Right ventricle myocardium superior (tissue), 1 donor: ENCODE measurements at regions of chr22 and their contacts with region 1.

Region 1: DNA sequence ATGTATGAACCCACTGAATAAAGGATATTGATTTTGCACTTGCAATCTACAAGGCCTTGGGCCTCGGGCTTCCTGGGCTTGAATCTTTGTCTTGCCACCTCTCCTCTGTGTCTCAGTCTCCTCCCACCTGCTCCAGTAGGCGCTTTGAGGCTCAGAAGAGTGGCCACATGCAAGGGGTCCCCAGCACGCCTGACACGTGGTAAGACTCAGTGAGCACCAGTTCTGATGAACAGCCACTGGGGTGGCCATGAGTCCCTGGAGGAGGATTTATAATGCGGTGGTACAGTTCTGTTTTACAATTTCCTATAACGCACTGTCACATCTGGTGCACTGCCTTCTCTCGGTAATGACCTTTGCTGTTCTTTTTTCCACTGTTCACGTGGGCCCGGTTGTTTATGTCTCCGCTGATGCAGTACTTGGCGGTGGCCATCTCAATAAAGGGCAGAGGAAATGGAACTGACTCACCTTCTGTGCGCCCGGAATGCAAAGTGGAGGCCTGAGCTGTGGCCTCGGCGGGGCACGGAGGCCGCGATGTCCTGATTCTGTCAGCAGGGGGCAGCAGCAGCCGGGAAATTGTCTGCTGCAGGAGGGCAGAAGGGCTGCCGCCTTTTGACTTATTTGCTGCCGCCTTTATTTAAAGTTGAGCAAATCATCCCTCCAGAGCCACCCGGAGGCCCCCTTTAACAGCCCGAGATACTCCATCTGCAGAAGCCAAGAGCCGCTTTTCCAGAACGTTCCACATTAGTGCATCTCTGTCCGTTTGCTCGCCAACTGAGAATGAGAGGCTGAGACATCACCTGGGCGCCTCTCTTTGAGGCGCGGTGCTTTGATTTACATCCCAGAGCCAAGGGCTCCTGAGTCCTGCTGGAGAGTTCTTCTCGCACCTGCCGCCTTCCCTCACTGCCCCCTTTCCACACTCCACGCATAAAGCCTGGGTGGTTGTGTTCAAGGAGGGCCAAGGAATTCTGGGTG is 6.0 kb upstream of the IFT27 start:
- DNase-seq: peak; percentile 86
- ATAC-seq: peak; percentile 92

Region 2: GRCh38 chr22:36713436-36713835 is 68.5 kb before region 1 on chr22:
- intact Hi-C with region 1: no loop called
- DNase-seq: no peak
- ATAC-seq: no peak

Region 3: GRCh38 chr22:36856121-36856791 is 74.3 kb after region 1 on chr22:
- intact Hi-C with region 1: loop called (anchors 5 kb)
- DNase-seq: peak; percentile 94
- ATAC-seq: peak; percentile 94

Region 4: DNA sequence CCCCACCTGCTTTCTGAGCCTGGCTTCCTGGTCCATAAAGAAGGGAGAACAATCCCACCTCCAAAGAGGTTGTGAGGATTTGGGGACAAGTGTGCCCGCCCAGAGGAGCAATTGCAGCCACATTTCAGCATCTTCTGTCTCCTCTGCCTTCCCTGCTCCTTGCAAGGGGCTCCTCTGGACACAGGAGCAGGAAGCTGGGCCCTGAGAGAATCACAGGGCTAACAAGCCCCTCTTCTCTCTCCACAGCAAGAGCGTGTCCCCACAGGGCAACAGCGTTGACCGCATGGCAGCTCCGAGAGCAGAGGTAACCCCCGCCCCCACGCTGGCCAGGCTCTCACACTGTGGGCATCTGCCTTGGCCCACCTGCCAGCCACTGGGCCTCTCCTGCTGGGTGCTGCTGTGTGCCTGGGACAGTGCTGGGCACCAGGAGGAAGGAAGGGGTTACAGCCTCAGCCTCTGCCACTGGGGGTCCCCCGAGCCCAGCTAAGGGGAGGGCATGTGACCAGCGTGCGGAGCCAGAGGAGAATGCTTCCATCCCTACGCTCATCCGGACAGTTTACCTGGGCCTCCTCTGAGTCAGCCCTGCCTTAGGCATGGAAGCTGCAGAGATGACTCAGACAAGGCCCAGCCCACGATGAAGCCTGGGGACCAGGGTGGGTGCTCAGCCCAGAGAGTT is 89.6 kb after region 1 on chr22:
- intact Hi-C with region 1: no loop called
- DNase-seq: no peak
- ATAC-seq: no peak

Region 5: GRCh38 chr22:36977947-36978660 is 196.2 kb after region 1 on chr22:
- intact Hi-C with region 1: loop called (anchors 5 kb)
- DNase-seq: peak; percentile 94
- ATAC-seq: peak; percentile 99

Region 6: GRCh38 chr22:37043828-37044538 is 262.0 kb after region 1 on chr22:
- intact Hi-C with region 1: loop called (anchors 5 kb)
- DNase-seq: peak; percentile 73
- ATAC-seq: peak; percentile 92

Region 7: GRCh38 chr22:37199103-37199759 is 417.3 kb after region 1 on chr22:
- intact Hi-C with region 1: loop called (anchors 5 kb)
- DNase-seq: peak; percentile 99
- ATAC-seq: peak; percentile 94